ENCODE measurements at regions of chr19 and their contacts with region 1.

Region 1: GRCh38 chr19:19997656-19998268 is 41.5 kb downstream of the ZNF682 start:
- DNase-seq: peak; percentile 81
- ATAC-seq: peak; percentile 90
- H3K4me3 Mint-ChIP-seq: no peak overlapping the region
- H3K27ac Mint-ChIP-seq: no peak overlapping the region
- H3K4me1 Mint-ChIP-seq: peaks cover 4% of the 10 kb centered on the region
- H3K27me3 Mint-ChIP-seq: no peaks in the 10 kb centered on the region; the same call in 1 of the 2 replicates
- CTCF ChIP-seq: peak; percentile 95

Region 2: GRCh38 chr19:19956434-19957075 is 41.2 kb before region 1 on chr19:
- CTCF ChIA-PET with region 1: interaction called, 12 read pairs
- POLR2A ChIA-PET with region 1: no interaction called
- DNase-seq: peak; percentile 83
- ATAC-seq: peak; percentile 98
- H3K4me3 Mint-ChIP-seq: peak overlapping the region; percentile 68
- H3K27ac Mint-ChIP-seq: peak overlapping the region; percentile 82
- H3K4me1 Mint-ChIP-seq: peaks cover 6% of the 10 kb centered on the region
- H3K27me3 Mint-ChIP-seq: peaks cover 2% of the 10 kb centered on the region
- CTCF ChIP-seq: no peak

Region 3: GRCh38 chr19:20051841-20052768 is 54.3 kb after region 1 on chr19:
- CTCF ChIA-PET with region 1: interaction called, 14 read pairs
- POLR2A ChIA-PET with region 1: interaction called, 5 read pairs
- DNase-seq: peak; percentile 99
- ATAC-seq: peak; percentile 97
- H3K4me3 Mint-ChIP-seq: peak overlapping the region; percentile 95
- H3K27ac Mint-ChIP-seq: peak overlapping the region; percentile 98
- H3K4me1 Mint-ChIP-seq: peaks cover 12% of the 10 kb centered on the region
- H3K27me3 Mint-ChIP-seq: no peaks in the 10 kb centered on the region
- CTCF ChIP-seq: no peak

Region 4: GRCh38 chr19:20077791-20078463 is 80.2 kb after region 1 on chr19 and contains the start of gene ZNF90:
- CTCF ChIA-PET with region 1: interaction called, 16 read pairs
- POLR2A ChIA-PET with region 1: interaction called, 3 read pairs
- DNase-seq: peak; percentile 95
- ATAC-seq: peak; percentile 92
- H3K4me3 Mint-ChIP-seq: peak within 1 kb of the TSS; percentile 98
- H3K27ac Mint-ChIP-seq: peak within 1 kb of the TSS; percentile 97
- H3K4me1 Mint-ChIP-seq: peaks cover 42% of the 10 kb centered on the region
- H3K27me3 Mint-ChIP-seq: no peaks in the 10 kb centered on the region
- CTCF ChIP-seq: no peak
- total RNA-seq, gene ZNF90: 112 to 114 TPM (median 114 TPM) in 3 replicates

Region 5: DNA sequence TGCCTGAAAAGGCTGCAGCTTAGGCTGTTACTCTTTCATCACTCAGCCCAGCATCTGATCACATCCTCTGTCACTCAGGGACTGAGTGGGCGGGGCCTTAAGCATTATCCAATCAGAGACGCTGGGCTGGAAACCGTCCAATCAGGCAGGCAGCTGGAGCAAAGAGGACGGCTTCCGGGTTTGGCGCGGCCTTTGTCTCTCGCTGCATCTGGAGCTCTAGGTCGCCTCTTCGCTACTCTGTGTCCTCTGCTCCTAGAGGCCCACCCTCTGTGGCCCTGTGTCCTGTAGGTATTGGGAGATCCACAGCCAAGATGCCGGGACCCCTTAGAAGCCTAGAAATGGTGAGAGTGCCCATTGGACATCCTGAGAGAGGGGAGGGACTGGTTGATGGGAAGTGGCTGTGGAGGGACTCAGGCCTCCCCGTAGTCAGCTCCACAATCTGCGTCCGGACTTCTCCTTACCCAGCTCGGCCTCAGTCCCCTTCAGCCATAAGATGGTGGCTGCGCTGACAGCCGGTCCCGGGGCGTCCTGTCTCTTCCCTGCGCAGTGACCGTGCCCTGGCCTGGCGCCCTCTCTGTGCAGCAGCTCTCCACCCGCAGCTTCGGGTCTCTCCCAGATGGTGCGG is 169.4 kb after region 1 on chr19 and contains the start of gene ZNF486:
- CTCF ChIA-PET with region 1: interaction called, 20 read pairs
- POLR2A ChIA-PET with region 1: interaction called, 6 read pairs
- DNase-seq: peak; percentile 98
- ATAC-seq: peak; percentile 97
- H3K4me3 Mint-ChIP-seq: peak within 1 kb of the TSS; percentile 98
- H3K27ac Mint-ChIP-seq: peak within 1 kb of the TSS; percentile 98
- H3K4me1 Mint-ChIP-seq: peaks cover 51% of the 10 kb centered on the region
- H3K27me3 Mint-ChIP-seq: no peaks in the 10 kb centered on the region
- CTCF ChIP-seq: no peak
- total RNA-seq, gene ZNF486: 20.7 to 22.3 TPM (median 20.8 TPM) in 3 replicates

Region 6: DNA sequence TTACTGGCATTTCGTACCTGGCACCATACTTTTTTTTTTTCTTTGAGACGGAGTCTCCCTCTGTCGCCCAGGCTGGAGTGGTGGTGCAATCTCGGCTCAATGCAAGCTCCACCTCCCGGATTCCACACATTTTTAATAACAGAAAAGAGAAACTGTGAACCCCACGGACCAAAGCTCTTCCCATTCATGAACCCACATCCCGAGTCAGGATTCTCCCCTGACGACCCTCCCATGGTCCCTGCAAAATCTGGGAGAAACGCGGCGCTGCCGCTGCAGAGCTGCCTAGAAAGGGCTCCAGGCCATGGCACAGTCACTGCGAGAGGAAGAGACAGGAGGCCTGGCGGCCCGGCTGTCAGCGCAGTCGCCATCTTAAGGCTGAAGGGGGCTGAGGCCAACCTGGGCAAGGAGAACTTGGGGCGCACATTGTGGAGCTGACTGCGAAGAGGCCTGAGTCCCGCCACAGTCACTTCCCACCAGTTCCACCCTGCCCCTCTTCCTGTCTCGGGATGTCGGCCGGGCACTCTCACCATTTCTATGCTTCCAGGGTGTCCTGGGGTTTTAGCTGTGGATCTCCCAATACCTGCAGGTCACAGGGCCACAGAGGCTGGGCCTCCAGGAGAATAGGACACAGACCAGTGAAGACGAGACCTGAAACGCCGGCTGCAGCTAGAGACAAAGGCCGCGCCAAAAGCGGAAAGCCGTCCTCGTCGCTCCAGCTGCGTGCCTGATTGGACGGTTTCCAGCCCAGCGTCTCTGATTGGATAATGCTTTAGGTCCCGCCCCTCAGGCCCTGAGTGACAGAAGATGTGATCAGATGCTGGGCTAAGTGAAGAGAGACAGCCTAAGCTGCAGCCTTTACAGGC is 240.2 kb after region 1 on chr19:
- CTCF ChIA-PET with region 1: interaction called, 21 read pairs
- POLR2A ChIA-PET with region 1: interaction called, 9 read pairs
- DNase-seq: peak; percentile 97
- ATAC-seq: peak; percentile 95
- H3K4me3 Mint-ChIP-seq: peak overlapping the region; percentile 100
- H3K27ac Mint-ChIP-seq: peak overlapping the region; percentile 99
- H3K4me1 Mint-ChIP-seq: peaks cover 52% of the 10 kb centered on the region
- H3K27me3 Mint-ChIP-seq: no peaks in the 10 kb centered on the region; the same call in 1 of the 2 replicates
- CTCF ChIP-seq: no peak